Dorsolateral prefrontal cortex (tissue), 120 donors: ENCODE measurements at regions of chr16 and their contacts with region 1.

Region 1: GRCh38 chr16:2752035-2752849 is at the start of gene SRRM2:
- DNase-seq: peak; percentile 86 to 94 (median 90)
- H3K4me3 ChIP-seq: peak within 1 kb of the TSS; percentile 65 to 99 (median 94)
- H3K27ac ChIP-seq: peak within 1 kb of the TSS; percentile 97 to 100 (median 100)
- H3K27me3 ChIP-seq: no peaks in the 10 kb centered on the region
- CTCF ChIP-seq: peak in 21 of 56 donors; percentile 4 to 47 (median 16)
- total RNA-seq, gene SRRM2: 369 to 792 (median 531) TPM

Region 2: DNA sequence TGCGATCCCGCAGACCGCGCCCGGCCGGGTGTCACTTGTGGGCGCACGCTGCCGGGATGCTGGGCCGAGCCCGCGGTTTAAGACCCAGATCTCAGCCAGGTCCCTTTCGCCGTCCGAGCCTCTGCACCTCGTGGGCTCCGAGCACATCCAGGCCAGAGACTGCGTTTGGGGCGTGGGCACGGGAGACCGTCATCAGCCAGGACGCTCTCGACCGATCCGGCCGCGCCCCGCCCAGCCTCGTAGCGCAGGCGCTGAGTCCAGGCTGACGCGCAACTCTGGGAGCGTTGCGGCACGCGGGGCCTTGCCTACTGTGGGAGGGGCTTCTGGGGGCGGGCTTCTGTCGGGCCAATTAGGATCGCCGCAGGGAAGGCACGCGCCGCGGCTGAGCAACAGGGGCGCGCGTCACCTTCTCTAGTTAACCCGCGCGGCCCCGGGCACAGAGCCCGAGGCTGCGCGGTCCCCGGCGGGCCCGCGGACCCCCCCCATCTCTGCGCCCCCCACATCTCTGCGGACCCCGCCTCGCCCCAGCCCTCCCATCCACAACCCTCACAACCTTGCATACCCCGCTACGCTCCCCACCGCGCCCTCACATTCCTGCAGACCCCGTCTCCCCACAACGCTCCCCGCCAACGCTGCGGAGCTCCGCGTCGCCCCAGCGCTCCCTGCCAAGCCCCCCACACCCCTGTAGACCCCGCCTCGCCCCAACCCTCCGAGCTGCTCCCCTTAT is 220.3 kb before region 1 on chr16:
- intact Hi-C with region 1: no loop called
- DNase-seq: peak; percentile 96 to 99 (median 98)
- H3K4me3 ChIP-seq: peak overlapping the region; percentile 48 to 91 (median 72)
- H3K27ac ChIP-seq: peak overlapping the region; percentile 42 to 96 (median 87)
- H3K27me3 ChIP-seq: no peaks in the 10 kb centered on the region
- CTCF ChIP-seq: peak in 18 of 56 donors; percentile 5 to 37 (median 25)

Region 3: DNA sequence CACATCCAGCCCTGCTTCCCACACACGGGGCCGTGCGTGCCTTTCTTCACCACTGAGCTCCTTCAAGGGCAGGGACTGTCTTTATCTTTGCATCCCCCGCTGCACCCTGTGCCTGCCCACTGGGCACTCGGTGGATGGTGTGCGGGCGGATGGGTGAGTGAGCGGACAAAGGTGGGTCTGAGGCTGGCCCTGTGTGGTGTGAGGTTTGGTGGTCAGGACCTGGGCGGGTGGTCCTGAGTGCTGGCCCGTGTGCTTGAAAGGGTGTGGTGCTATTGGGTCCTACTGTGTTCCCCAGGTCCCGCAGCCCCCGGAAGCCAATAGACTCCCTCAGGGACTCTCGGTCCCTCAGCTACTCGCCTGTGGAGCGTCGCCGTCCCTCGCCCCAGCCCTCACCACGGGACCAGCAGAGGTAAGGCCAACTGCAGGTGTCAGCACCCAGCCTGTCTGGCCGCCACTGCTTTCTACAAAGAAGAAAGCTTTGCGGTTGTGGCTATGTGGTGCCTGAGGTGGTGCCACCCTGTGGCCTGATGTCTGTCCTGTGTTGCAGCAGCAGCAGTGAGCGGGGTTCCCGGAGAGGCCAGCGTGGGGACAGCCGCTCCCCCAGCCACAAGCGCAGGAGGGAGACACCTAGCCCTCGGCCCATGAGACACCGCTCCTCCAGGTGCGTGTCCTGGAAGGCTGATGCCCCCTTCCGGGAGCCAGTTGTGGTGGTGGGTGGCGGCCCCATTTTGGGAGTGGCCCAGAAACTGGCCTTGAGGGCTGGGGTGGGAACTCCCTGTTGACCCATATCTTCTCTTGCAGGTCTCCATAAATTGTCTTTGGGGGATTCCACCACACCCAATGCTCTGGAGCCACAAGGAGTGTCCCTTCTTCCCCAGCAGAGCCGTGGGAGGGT is 18.1 kb after region 1 on chr16:
- intact Hi-C with region 1: loop called in 1 of 2 experiments (anchors 2 kb)
- DNase-seq: peak in 2 of 10 donors; percentile 25 to 35
- H3K4me3 ChIP-seq: no peak overlapping the region
- H3K27ac ChIP-seq: peak overlapping the region in 6 of 59 donors; percentile 4 to 51 (median 24)
- H3K27me3 ChIP-seq: no peaks in the 10 kb centered on the region
- CTCF ChIP-seq: no peak

Region 4: DNA sequence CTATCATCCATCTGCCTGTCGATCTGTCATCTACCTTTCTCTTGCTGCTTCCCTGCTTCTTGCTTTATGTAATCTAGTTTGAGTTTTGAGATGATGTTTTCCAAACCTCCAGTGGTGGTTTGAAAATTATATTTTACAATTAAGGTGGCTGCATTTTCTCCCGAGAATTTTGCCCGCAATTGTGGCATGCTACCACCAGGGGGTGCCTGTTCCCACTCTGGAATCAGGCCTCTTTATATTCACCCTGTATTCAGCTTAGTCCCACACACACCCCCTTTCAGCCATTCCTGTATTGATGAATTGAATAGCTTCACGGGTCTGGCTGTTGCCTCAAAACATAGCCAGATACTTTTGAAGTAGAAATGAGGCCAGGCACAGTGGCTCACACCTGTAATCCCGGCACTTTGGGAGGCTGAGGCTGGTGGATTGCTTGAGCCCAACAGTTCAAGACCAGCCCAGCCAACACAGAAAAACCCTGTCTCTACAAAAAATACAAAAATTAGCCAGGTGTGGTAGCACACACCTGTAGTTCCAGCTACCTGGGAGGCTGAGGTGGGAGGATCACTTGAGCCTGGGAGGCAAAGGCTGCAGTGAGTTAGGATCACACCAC is 102.6 kb after region 1 on chr16:
- intact Hi-C with region 1: no loop called
- DNase-seq: no peak
- H3K4me3 ChIP-seq: no peak overlapping the region
- H3K27ac ChIP-seq: no peak overlapping the region
- H3K27me3 ChIP-seq: peaks cover 0 to 60% (median 34%) of the 10 kb centered on the region in 45 donors
- CTCF ChIP-seq: peak in 21 of 56 donors; percentile 10 to 52 (median 19)